ENCODE measurements at regions of chr21 and their contacts with region 1.

Region 1: DNA sequence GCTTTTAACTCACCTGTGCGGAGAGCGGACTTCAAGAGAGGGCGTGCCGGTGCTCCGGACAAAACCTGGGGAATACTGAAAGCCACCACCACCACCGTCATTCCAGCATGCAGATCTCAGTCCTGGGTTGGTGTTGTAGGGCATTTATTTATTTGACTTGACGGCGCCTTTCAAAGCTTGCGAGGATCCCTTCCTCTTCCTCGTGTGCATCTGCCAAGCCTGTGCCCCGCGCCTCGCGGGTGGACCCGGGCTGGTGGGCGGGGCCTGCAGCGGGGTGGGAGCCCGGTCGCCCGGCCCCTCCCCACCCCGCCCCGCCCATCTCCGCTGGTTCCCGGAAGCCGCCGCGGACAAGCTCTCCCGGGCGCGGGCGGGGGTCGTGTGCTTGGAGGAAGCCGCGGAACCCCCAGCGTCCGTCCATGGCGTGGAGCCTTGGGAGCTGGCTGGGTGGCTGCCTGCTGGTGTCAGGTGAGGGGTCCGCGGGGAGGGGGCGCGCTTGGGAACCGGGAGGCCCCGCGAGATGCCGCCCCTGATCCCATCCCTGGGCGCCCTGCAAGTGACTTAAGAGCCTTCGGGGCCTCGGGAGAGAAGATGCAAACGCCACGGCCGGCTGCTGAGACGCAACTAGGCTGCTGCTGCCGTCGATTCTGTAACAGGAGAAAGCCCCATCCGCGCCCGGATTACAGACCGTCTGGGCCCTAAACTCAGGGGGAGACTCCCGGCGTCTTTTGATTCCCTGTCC is at the start of gene IL10RB:
- DNase-seq: peak; percentile 90 to 100 (median 98)
- ATAC-seq: peak; percentile 97
- H3K4me3 ChIP-seq: peak within 1 kb of the TSS; percentile 93
- H3K27ac ChIP-seq: peak within 1 kb of the TSS; percentile 71
- H3K4me1 ChIP-seq: peaks cover 5 to 17% of the 10 kb centered on the region in 2 experiments; a peak in 4 of 5 replicates
- H3K27me3 ChIP-seq: no peaks in the 10 kb centered on the region
- CTCF ChIP-seq: no peak
- EP300 ChIP-seq: no peak
- POLR2A ChIP-seq: peak; percentile 75
- RAD21 ChIP-seq: no peak
- polyA plus RNA-seq, gene IL10RB: 10.9 to 14.7 TPM

Region 2: GRCh38 chr21:32770871-32771523 is 495.2 kb before region 1 on chr21:
- CTCF ChIA-PET with region 1: no interaction called
- POLR2A ChIA-PET with region 1: no interaction called
- in situ Hi-C with region 1: no loop called
- intact Hi-C with region 1: no loop called
- DNase-seq: peak; percentile 65 to 84 (median 80)
- ATAC-seq: peak; percentile 62
- H3K4me3 ChIP-seq: peak overlapping the region; percentile 90
- H3K27ac ChIP-seq: peak overlapping the region; percentile 90
- H3K4me1 ChIP-seq: peaks cover 10 to 11% of the 10 kb centered on the region in 2 experiments
- H3K27me3 ChIP-seq: no peaks in the 10 kb centered on the region
- CTCF ChIP-seq: 0 out of 6 replicates have a peak, but pooled peaks of 1 of the 3 experiments have one; percentile 1
- EP300 ChIP-seq: no peak
- POLR2A ChIP-seq: no peak
- RAD21 ChIP-seq: no peak

Region 3: DNA sequence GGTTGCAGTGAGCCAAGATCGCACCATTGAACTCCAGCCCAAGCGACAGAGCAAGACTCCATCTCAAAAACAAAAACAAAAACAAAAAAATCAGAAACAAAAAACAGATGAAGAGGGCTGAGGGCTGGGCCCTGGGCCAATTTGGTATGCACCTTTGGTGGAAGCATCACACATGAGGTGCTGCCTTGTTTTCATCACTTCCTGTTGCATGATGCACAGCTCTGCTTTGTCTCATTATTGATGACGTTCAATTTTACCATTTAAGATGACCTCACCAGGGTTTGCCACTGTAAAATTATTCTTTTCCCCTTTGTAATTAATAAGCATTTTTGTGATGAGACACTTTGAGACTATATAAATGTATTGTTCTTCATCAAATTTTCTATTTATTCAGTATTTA is 46.3 kb before region 1 on chr21:
- CTCF ChIA-PET with region 1: no interaction called
- POLR2A ChIA-PET with region 1: no interaction called
- in situ Hi-C with region 1: no loop called
- intact Hi-C with region 1: no loop called
- DNase-seq: no peak
- ATAC-seq: no peak
- H3K4me3 ChIP-seq: no peak overlapping the region
- H3K27ac ChIP-seq: no peak overlapping the region
- H3K4me1 ChIP-seq: peaks cover 13 to 19% of the 10 kb centered on the region in 2 experiments; a peak in 4 of 5 replicates
- H3K27me3 ChIP-seq: no peaks in the 10 kb centered on the region
- CTCF ChIP-seq: no peak
- EP300 ChIP-seq: no peak
- POLR2A ChIP-seq: no peak
- RAD21 ChIP-seq: no peak

Region 4: GRCh38 chr21:33286600-33287456 is 20.6 kb after region 1 on chr21:
- CTCF ChIA-PET with region 1: no interaction called
- POLR2A ChIA-PET with region 1: interaction called, 13 read pairs
- in situ Hi-C with region 1: no loop called
- intact Hi-C with region 1: no loop called
- DNase-seq: no peak
- ATAC-seq: peak; percentile 61
- H3K4me3 ChIP-seq: no peak overlapping the region
- H3K27ac ChIP-seq: no peak overlapping the region
- H3K4me1 ChIP-seq: peaks cover 6 to 14% of the 10 kb centered on the region in 2 experiments; a peak in 4 of 5 replicates
- H3K27me3 ChIP-seq: no peaks in the 10 kb centered on the region
- CTCF ChIP-seq: no peak
- EP300 ChIP-seq: no peak
- POLR2A ChIP-seq: no peak
- RAD21 ChIP-seq: no peak

Region 5: DNA sequence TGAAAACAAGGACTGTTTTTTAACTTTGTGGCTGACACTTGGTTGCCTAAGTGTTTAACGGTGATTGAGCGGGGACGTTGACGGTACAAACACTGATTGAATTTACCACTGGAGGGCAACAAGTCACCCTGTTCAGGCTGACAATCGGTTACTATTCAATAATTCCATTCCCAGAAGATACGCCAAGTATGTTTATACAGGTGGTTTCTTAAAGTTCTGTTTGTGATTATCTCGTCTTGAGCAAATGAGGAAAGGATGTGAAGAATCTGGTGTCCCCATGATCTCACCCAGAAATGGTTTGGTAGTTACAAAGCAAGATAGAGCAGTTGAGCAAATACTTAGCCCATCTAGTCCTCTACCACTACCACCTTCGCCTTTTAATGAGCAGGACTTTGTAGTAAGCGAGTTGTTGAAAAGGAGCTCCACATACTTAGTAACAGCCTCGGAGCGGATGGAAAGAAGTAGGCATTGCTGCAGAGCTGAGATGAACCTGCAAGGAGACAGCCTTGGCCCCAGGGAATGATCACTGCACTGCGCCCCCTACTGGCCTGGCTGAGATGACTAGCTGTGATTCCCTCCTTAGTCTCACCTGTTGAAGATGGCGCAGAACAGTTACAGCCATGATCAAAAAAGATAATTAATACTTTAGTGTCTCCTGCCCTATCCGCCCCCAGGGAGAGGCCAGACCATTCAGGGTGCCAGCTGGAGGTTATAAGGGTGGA is 94.8 kb after region 1 on chr21:
- CTCF ChIA-PET with region 1: no interaction called
- POLR2A ChIA-PET with region 1: interaction called, 4 read pairs
- in situ Hi-C with region 1: no loop called
- intact Hi-C with region 1: loop called (anchors 5 kb)
- DNase-seq: peak; percentile 87 to 90 (median 88)
- ATAC-seq: peak; percentile 97
- H3K4me3 ChIP-seq: peak overlapping the region; percentile 23
- H3K27ac ChIP-seq: no peak overlapping the region
- H3K4me1 ChIP-seq: peaks cover 9 to 20% of the 10 kb centered on the region in 2 experiments; a peak in 3 of 5 replicates
- H3K27me3 ChIP-seq: no peaks in the 10 kb centered on the region
- CTCF ChIP-seq: peak; percentile 90 to 97 (median 92)
- EP300 ChIP-seq: no peak
- POLR2A ChIP-seq: no peak
- RAD21 ChIP-seq: peak; percentile 48 to 75